Gastrocnemius medialis (tissue), 4 donors: ENCODE measurements at regions of chr9 and their contacts with region 1.

Region 1: GRCh38 chr9:136482793-136483588 is at the start of gene SEC16A:
- DNase-seq: peak; percentile 99
- ATAC-seq: peak; percentile 82 to 87
- H3K4me3 ChIP-seq: peak within 1 kb of the TSS; percentile 70 to 87 (median 74)
- H3K27ac ChIP-seq: peak within 1 kb of the TSS; percentile 93 to 100 (median 98)
- H3K4me1 ChIP-seq: peaks cover 24 to 25% of the 10 kb centered on the region in 2 donors
- H3K27me3 ChIP-seq: no peaks in the 10 kb centered on the region
- CTCF ChIP-seq: no peak
- POLR2A ChIP-seq: peak; percentile 80 to 94
- total RNA-seq, gene SEC16A: 23.9 to 50.4 (median 46.6) TPM

Region 2: DNA sequence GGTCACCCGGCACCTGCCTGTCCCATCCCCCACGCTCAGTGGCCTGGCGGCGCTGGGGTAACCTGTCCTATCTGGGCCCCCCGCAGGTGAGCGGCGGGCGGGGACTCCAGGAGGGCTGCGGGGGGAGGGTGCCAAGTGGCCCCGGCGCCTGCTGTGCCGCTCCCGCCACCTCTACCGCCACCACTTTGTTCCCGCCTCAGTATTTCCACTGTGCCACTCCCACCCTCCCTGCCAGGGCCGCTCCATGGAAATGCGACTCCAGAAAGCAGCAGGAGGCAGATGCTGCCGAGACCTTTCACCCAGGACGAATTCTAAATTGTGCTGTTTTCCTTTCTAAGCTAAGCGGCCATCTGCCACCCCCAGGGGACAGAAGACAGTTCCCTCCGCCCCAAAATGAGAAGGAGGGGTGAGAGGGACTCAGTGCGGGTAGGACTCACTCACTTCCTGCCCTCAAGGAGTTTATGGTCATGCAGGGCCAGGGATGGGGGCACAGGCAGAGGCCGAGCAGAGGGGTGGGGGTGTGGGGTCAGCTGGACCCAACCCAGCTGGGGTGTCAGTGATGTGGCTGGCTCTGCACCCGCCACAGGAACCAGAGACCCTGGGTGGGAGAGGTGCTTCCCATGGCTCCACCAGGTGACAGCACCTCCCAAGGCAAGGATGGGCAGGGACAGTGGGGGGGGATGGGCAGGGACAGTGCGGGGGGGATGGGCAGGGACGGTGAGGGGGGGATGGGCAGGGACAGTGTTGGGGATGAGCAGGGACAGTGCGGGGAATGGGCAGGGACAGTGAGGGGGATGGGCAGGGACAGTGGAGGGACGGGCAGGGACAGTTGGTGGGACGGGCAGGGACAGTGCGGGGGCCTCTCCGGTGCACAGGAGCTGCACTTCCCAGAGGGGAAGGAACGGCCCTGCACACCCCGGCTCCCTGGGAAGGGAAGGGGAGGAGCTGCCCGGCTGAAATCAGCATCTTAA is 45.0 kb after region 1 on chr9:
- in situ Hi-C with region 1: no loop called
- intact Hi-C with region 1: loop called (anchors 5 kb)
- DNase-seq: no peak
- ATAC-seq: no peak
- H3K4me3 ChIP-seq: no peak overlapping the region
- H3K27ac ChIP-seq: peak overlapping the region; percentile 51 to 75 (median 58)
- H3K4me1 ChIP-seq: peaks cover 48 to 68% of the 10 kb centered on the region in 2 donors
- H3K27me3 ChIP-seq: no peaks in the 10 kb centered on the region
- CTCF ChIP-seq: no peak
- POLR2A ChIP-seq: no peak

Region 3: DNA sequence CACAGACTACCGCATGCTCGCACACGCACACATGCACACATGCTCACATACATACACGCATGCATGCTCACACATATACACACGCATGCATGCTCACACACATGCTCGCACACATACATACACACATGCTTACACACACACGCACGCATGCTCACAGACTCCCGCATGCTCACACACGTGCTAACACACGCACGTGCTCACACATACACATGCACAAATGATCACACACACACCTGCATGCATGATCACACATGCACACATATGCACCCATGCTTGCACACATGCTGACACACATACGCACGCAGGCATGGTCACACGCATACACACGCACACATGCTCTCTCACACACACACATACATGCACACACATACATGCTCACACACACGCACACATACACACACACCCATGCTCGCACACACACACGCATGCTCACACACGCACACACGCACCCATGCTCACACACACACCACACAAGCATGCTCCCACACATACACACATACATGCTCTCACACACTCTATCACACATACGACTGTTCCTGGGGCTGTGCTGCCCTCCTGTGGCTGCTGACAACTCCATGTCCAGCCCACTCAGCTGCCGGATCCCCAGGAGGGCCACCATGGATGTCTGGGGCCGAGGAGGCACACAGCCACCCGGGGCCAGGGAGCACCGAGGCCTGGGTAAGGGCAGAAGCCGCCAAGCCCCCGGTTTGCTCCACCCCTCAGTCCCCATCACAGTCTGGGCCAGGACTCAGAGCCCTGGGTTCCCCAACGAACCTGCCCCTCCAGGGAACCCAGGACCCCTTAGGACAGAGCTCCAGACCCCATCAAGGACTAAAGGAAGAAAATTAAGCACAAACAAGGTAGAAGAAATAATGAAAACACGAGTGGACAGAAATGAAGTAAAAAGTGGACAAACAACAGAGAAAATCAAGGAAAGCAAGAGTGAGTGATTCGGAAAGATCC is 148.3 kb after region 1 on chr9:
- in situ Hi-C with region 1: loop called in 1 of 4 experiments (anchors 25 kb)
- intact Hi-C with region 1: loop called (anchors 1 kb)
- DNase-seq: peak; percentile 44 to 64
- ATAC-seq: peak; percentile 75 to 86
- H3K4me3 ChIP-seq: no peak overlapping the region
- H3K27ac ChIP-seq: no peak overlapping the region
- H3K4me1 ChIP-seq: no peaks in the 10 kb centered on the region
- H3K27me3 ChIP-seq: no peaks in the 10 kb centered on the region
- CTCF ChIP-seq: peak; percentile 69 to 85 (median 83)
- POLR2A ChIP-seq: no peak

Region 4: DNA sequence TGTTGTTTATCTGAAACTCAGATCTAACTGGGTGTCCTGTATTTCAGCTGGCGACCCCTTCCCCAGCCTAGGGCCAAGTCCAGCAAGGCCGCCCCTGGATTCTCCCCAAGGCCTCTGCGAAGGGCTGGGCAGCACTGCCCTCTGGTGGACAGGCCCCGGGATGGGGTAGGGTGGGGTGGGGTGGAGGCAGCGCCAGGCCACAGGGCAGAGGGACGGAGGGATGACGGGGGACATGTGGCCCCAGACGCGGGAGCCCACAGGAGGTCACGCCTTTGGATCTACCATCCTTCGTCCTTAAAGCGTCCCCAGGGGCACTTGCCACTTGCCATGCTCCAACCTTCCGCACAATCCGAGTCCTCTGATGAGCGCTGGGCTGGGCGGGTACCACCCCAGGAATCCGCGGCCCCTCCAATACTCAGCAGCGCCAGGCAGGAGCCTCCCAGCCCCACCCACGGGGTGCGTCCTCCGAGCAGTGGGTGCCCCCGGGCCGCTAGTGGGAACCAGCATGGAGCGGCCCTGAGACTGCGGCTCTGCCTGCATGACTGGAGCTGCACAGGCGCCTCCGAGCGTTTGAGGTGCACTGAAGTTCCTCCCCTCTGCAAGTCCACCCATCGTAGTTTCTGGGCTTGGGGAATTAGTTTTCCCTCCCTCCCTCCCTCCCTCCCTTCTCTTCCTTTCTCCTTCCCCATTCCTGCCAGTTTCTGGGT is 211.4 kb after region 1 on chr9:
- in situ Hi-C with region 1: no loop called
- intact Hi-C with region 1: loop called (anchors 1 kb)
- DNase-seq: peak; percentile 46 to 66
- ATAC-seq: peak; percentile 45 to 51
- H3K4me3 ChIP-seq: no peak overlapping the region
- H3K27ac ChIP-seq: peak overlapping the region in 3 of 4 donors; percentile 20 to 42 (median 37)
- H3K4me1 ChIP-seq: peaks cover 21% of the 10 kb centered on the region in 2 donors
- H3K27me3 ChIP-seq: peaks cover 0 to 12% (median 5%) of the 10 kb centered on the region in 3 donors
- CTCF ChIP-seq: peak; percentile 78 to 93 (median 89)
- POLR2A ChIP-seq: no peak

Region 5: DNA sequence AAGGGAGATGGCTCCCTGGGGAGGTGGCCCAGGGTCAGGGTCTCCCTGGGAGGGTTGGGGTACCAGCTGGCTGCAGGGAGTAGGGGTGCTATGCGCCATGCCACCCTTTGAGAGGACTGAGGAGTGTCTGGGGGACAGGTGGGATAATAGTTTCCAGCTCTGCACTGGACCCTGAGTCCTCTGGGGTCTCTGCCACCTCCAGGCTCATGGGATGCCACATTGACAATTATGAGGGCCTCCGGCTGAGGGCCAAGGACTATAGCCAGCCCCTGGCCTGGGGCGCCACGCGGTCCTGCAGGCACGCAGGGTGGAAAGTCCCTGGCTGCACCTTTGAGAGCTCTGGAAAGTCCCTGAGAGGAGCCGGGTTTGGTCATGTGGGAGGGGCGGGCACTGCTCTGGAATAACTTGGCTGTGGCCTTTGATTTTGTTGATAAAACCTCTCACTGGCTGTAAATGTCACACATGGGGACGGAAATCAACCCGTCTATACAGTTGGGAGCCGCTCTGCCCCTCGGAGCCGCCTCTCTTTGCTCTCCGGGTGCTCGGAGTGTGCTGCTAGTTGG is 419.3 kb after region 1 on chr9:
- in situ Hi-C with region 1: no loop called
- intact Hi-C with region 1: no loop called
- DNase-seq: peak; percentile 72 to 81
- ATAC-seq: peak; percentile 84 to 90
- H3K4me3 ChIP-seq: no peak overlapping the region
- H3K27ac ChIP-seq: peak overlapping the region; percentile 76 to 82 (median 80)
- H3K4me1 ChIP-seq: peaks cover 24 to 32% of the 10 kb centered on the region in 2 donors
- H3K27me3 ChIP-seq: no peaks in the 10 kb centered on the region
- CTCF ChIP-seq: no peak
- POLR2A ChIP-seq: peak in 1 of 2 donors; percentile 45

Region 6: GRCh38 chr9:137423004-137423874 is 940.2 kb after region 1 on chr9 and contains the starts of genes EXD3 and NOXA1:
- in situ Hi-C with region 1: no loop called
- intact Hi-C with region 1: loop called (anchors 10 kb)
- DNase-seq: peak; percentile 85 to 90
- ATAC-seq: peak; percentile 89 to 92
- H3K4me3 ChIP-seq: peak within 1 kb of the TSS; percentile 74 to 91 (median 82)
- H3K27ac ChIP-seq: peak within 1 kb of the TSS; percentile 68 to 81 (median 78)
- H3K4me1 ChIP-seq: peaks cover 14 to 29% of the 10 kb centered on the region in 2 donors
- H3K27me3 ChIP-seq: no peaks in the 10 kb centered on the region
- CTCF ChIP-seq: peak; percentile 61 to 98 (median 96)
- POLR2A ChIP-seq: peak; percentile 56 to 66
- total RNA-seq, gene EXD3: 4.8 to 12.5 (median 6.4) TPM
- total RNA-seq, gene NOXA1: 0.41 to 2.5 (median 1.8) TPM